GM10248 (cell line): ENCODE measurements at regions of chr18 and their contacts with region 1.

Region 1: GRCh38 chr18:76398896-76399612 is 96.0 kb downstream of the ZNF516 start:
- DNase-seq: peak; percentile 87
- CTCF ChIP-seq: peak; percentile 97

Region 2: GRCh38 chr18:76410660-76411417 is 11.8 kb after region 1 on chr18:
- CTCF ChIA-PET with region 1: interaction called, 34 read pairs
- POLR2A ChIA-PET with region 1: no interaction called
- DNase-seq: peak; percentile 75
- CTCF ChIP-seq: no peak

Region 3: GRCh38 chr18:76416911-76417310 is 17.9 kb after region 1 on chr18:
- CTCF ChIA-PET with region 1: interaction called, 19 read pairs
- POLR2A ChIA-PET with region 1: no interaction called
- DNase-seq: no peak
- CTCF ChIP-seq: no peak

Region 4: GRCh38 chr18:76620321-76621170 is 221.5 kb after region 1 on chr18:
- CTCF ChIA-PET with region 1: interaction called, 50 read pairs
- POLR2A ChIA-PET with region 1: no interaction called
- DNase-seq: peak; percentile 84
- CTCF ChIP-seq: peak; percentile 67

Region 5: GRCh38 chr18:76697441-76697901 is 298.4 kb after region 1 on chr18:
- CTCF ChIA-PET with region 1: interaction called, 11 read pairs
- POLR2A ChIA-PET with region 1: no interaction called
- DNase-seq: no peak
- CTCF ChIP-seq: no peak

Region 6: GRCh38 chr18:76709659-76710645 is 310.9 kb after region 1 on chr18:
- CTCF ChIA-PET with region 1: interaction called, 107 read pairs
- POLR2A ChIA-PET with region 1: no interaction called
- DNase-seq: peak; percentile 72
- CTCF ChIP-seq: peak; percentile 91